IMR-90 (cell line): ENCODE measurements at regions of chr7 and their contacts with region 1.

Region 1: GRCh38 chr7:5450549-5451372 is 27.1 kb upstream of the TNRC18 start:
- DNase-seq: peak; percentile 34
- ATAC-seq: peak; percentile 53
- H3K4me3 ChIP-seq: no peak overlapping the region
- H3K27ac ChIP-seq: no peak overlapping the region
- H3K4me1 ChIP-seq: peaks cover 1% of the 10 kb centered on the region; the same call in 1 of the 2 replicates
- H3K27me3 ChIP-seq: no peaks in the 10 kb centered on the region
- CTCF ChIP-seq: peak; percentile 60
- POLR2A ChIP-seq: no peak; the same call in 1 of the 2 replicates
- RAD21 ChIP-seq: peak; percentile 70

Region 2: GRCh38 chr7:5237286-5237685 is 213.5 kb before region 1 on chr7:
- CTCF ChIA-PET with region 1: interaction called, 5 read pairs
- POLR2A ChIA-PET with region 1: no interaction called
- dilution Hi-C with region 1: no loop called
- in situ Hi-C with region 1: loop called (anchors 10 kb)
- intact Hi-C with region 1: loop called (anchors 1 kb)
- DNase-seq: peak; percentile 40
- ATAC-seq: peak; percentile 21
- H3K4me3 ChIP-seq: no peak overlapping the region
- H3K27ac ChIP-seq: no peak overlapping the region
- H3K4me1 ChIP-seq: peaks cover 4% of the 10 kb centered on the region
- H3K27me3 ChIP-seq: no peaks in the 10 kb centered on the region; the same call in 1 of the 2 replicates
- CTCF ChIP-seq: no peak
- POLR2A ChIP-seq: no peak
- RAD21 ChIP-seq: no peak

Region 3: DNA sequence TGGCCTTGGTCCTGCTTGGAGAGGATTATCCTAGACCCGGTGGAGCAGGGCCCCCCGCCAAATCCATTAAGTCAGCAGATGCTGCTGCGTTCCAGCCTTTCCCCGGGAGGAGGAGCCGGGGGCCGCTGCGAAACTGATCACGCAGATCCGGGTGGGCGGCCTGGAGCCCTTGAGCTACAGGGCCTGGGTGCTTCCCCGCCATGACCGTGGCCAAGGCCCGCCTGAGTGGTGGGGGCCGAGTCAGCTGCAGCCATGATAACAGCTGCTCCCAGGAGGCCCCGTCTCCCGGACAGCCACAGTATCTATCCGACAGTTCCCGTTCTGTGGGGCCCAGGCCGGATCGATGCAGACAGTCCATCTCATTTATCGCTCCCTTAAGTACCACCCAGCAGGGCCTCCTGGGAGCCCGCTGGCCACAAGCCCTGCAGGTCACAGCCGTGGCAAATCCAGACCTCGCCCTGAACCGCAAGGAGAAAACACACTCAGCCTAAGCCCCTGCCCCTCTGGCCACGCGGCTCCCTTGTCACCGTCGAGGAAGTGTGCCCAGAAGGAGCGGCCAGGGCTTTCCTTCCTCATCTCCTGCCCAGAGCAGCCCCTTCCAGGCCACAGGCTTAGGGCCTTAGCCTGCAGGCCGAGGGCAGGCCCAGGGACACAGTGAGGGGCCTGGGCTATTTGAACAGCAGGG is 202.4 kb before region 1 on chr7:
- CTCF ChIA-PET with region 1: interaction called, 7 read pairs
- POLR2A ChIA-PET with region 1: no interaction called
- dilution Hi-C with region 1: no loop called
- in situ Hi-C with region 1: loop called (anchors 10 kb)
- intact Hi-C with region 1: no loop called
- DNase-seq: peak; percentile 21
- ATAC-seq: no peak; the same call in none of the 2 replicates
- H3K4me3 ChIP-seq: no peak overlapping the region
- H3K27ac ChIP-seq: no peak overlapping the region
- H3K4me1 ChIP-seq: no peaks in the 10 kb centered on the region
- H3K27me3 ChIP-seq: peaks cover 9% of the 10 kb centered on the region; the same call in 1 of the 2 replicates
- CTCF ChIP-seq: no peak
- POLR2A ChIP-seq: no peak
- RAD21 ChIP-seq: no peak